Naive thymus-derived CD8-positive, alpha-beta T cell (primary cell): ENCODE measurements at regions of chr17 and their contacts with region 1.

Region 1: GRCh38 chr17:7687908-7688807 is at the start of gene WRAP53:
- DNase-seq: peak; percentile 92 to 98 (median 95)
- ATAC-seq: peak; percentile 79
- H3K4me3 Mint-ChIP-seq: peak within 1 kb of the TSS; percentile 87 to 99 (median 98)
- H3K27ac Mint-ChIP-seq: peak within 1 kb of the TSS; percentile 99 to 100 (median 100)
- H3K4me1 Mint-ChIP-seq: peaks cover 25 to 51% (median 50%) of the 10 kb centered on the region in 4 donors
- H3K27me3 Mint-ChIP-seq: peaks cover 0 to 3% (median 0%) of the 10 kb centered on the region in 5 donors
- polyA plus RNA-seq, gene WRAP53: 10.5 to 14.1 (median 13.9) TPM

Region 2: GRCh38 chr17:7403977-7404736 is 284.0 kb before region 1 on chr17 and contains the start of gene TMEM256:
- POLR2A ChIA-PET with region 1: interaction called, 13 read pairs
- DNase-seq: peak; percentile 89 to 97 (median 93)
- ATAC-seq: peak; percentile 87 to 91
- H3K4me3 Mint-ChIP-seq: peak within 1 kb of the TSS; percentile 92 to 98 (median 96)
- H3K27ac Mint-ChIP-seq: peak within 1 kb of the TSS; percentile 89 to 99 (median 98)
- H3K4me1 Mint-ChIP-seq: peaks cover 15 to 35% (median 28%) of the 10 kb centered on the region in 4 donors
- H3K27me3 Mint-ChIP-seq: peaks cover 0 to 4% (median 0%) of the 10 kb centered on the region in 5 donors
- polyA plus RNA-seq, gene TMEM256: 62.6 to 96.5 (median 81.4) TPM

Region 3: DNA sequence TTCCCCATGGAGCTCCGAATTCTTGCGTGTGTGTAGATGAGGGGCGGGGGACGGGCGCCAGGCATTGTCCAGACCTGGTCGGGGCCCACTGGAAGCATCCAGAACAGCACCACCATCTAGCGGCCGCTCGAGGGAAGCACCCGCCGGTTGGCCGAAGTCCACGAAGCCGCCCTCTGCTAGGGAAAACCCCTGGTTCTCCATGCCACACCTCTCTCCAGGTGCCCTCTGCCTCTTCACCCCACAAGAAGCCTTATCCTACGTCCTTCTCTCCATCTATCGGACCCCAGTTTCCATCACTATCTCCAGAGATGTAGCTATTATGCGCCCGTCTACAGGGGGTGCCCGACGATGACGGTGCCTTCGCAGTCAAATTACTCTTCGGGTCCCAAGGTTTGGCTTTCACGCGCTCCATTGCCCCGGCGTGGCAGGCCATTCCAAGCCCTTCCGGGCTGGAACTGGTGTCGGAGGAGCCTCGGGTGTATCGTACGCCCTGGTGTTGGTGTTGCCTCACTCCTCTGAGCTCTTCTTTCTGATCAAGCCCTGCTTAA is 127.1 kb before region 1 on chr17:
- POLR2A ChIA-PET with region 1: interaction called, 33 read pairs
- DNase-seq: peak; percentile 60 to 89 (median 78)
- ATAC-seq: peak; percentile 62 to 69
- H3K4me3 Mint-ChIP-seq: peak overlapping the region; percentile 88 to 98 (median 94)
- H3K27ac Mint-ChIP-seq: peak overlapping the region; percentile 83 to 99 (median 97)
- H3K4me1 Mint-ChIP-seq: peaks cover 31 to 59% (median 55%) of the 10 kb centered on the region in 4 donors
- H3K27me3 Mint-ChIP-seq: no peaks in the 10 kb centered on the region

Region 4: GRCh38 chr17:7620835-7621234 is 67.3 kb before region 1 on chr17:
- POLR2A ChIA-PET with region 1: interaction called, 105 read pairs
- DNase-seq: no peak
- ATAC-seq: no peak
- H3K4me3 Mint-ChIP-seq: no peak overlapping the region
- H3K27ac Mint-ChIP-seq: no peak overlapping the region
- H3K4me1 Mint-ChIP-seq: no peaks in the 10 kb centered on the region
- H3K27me3 Mint-ChIP-seq: no peaks in the 10 kb centered on the region

Region 5: DNA sequence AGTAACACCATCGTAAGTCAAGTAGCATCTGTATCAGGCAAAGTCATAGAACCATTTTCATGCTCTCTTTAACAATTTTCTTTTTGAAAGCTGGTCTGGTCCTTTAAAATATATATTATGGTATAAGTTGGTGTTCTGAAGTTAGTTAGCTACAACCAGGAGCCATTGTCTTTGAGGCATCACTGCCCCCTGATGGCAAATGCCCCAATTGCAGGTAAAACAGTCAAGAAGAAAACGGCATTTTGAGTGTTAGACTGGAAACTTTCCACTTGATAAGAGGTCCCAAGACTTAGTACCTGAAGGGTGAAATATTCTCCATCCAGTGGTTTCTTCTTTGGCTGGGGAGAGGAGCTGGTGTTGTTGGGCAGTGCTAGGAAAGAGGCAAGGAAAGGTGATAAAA is 14.9 kb before region 1 on chr17:
- POLR2A ChIA-PET with region 1: interaction called, 14 read pairs
- DNase-seq: peak in 5 of 10 donors; percentile 12 to 44 (median 28)
- ATAC-seq: no peak
- H3K4me3 Mint-ChIP-seq: no peak overlapping the region
- H3K27ac Mint-ChIP-seq: peak overlapping the region in 1 of 10 donors; percentile 27
- H3K4me1 Mint-ChIP-seq: peaks cover 0 to 10% (median 5%) of the 10 kb centered on the region in 4 donors
- H3K27me3 Mint-ChIP-seq: no peaks in the 10 kb centered on the region

Region 6: DNA sequence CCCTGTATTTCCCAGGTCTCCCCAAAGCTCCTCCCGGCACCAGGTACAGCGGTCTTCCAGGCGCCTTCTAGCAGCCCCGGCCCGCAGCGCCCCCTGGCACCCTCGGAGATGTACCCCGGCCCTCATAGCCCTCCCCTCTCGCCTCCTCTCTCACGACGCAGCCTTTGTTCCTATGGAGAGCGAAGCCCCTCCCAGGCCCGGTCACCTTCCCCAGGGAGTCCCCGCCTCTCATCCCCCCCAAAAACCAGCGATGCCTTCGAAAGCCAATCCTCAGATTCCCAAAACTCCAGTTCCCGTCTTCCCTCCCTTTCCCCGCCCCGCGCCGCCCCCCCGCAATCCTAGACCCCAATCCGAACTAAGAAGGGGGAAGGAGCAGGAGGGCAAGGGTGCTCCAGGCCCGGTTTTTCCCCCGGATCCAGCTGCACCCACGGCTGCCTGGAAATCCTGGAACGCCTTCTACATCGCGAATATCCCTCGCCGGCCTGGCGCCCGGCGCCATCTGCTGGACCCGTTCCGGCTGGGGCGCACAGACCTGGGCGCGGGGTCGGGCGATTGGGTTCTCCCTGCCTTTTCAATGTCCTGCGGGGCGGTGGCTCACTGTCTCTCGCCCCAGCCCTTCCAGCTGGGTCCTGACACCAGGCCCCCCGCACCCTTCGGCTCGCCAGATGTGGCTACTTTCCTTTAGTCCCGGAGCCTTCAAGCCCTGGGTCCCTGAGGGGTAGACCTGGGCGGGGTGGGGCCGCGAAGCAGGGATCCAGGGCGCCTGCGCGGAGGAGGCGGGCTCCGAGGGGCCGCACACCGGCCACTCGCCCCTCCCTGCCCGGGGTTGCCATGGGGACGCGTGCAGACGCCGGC is 29.0 kb after region 1 on chr17 and contains the start of gene DNAH2:
- POLR2A ChIA-PET with region 1: no interaction called
- DNase-seq: peak in 4 of 10 donors; percentile 14 to 28 (median 25)
- ATAC-seq: peak; percentile 62 to 76
- H3K4me3 Mint-ChIP-seq: peak within 1 kb of the TSS; percentile 62 to 85 (median 79)
- H3K27ac Mint-ChIP-seq: peak within 1 kb of the TSS in 1 of 10 donors; percentile 20
- H3K4me1 Mint-ChIP-seq: peaks cover 14 to 41% (median 21%) of the 10 kb centered on the region in 4 donors
- H3K27me3 Mint-ChIP-seq: peaks cover 37 to 95% (median 62%) of the 10 kb centered on the region in 5 donors
- polyA plus RNA-seq, gene DNAH2: not detected

Region 7: GRCh38 chr17:8156246-8156992 is 468.3 kb after region 1 on chr17:
- POLR2A ChIA-PET with region 1: interaction called, 15 read pairs
- DNase-seq: peak; percentile 97 to 100 (median 100)
- ATAC-seq: peak; percentile 67 to 71
- H3K4me3 Mint-ChIP-seq: no peak overlapping the region
- H3K27ac Mint-ChIP-seq: no peak overlapping the region
- H3K4me1 Mint-ChIP-seq: peaks cover 31 to 70% (median 54%) of the 10 kb centered on the region in 4 donors
- H3K27me3 Mint-ChIP-seq: peaks cover 0 to 2% (median 0%) of the 10 kb centered on the region in 5 donors